Cardiac septum (tissue), 1 donor: ENCODE measurements at regions of chr13 and their contacts with region 1.

Region 1: GRCh38 chr13:101949681-101950080 is 452.2 kb downstream of the FGF14 start:
- DNase-seq: no peak

Region 2: GRCh38 chr13:102003848-102004570 is 54.3 kb after region 1 on chr13:
- intact Hi-C with region 1: loop called (anchors 5 kb)
- DNase-seq: no peak

Region 3: GRCh38 chr13:102236830-102237229 is 287.1 kb after region 1 on chr13:
- intact Hi-C with region 1: no loop called
- DNase-seq: no peak